Dorsolateral prefrontal cortex (tissue), 120 donors: ENCODE measurements at regions of chr7 and their contacts with region 1.

Region 1: DNA sequence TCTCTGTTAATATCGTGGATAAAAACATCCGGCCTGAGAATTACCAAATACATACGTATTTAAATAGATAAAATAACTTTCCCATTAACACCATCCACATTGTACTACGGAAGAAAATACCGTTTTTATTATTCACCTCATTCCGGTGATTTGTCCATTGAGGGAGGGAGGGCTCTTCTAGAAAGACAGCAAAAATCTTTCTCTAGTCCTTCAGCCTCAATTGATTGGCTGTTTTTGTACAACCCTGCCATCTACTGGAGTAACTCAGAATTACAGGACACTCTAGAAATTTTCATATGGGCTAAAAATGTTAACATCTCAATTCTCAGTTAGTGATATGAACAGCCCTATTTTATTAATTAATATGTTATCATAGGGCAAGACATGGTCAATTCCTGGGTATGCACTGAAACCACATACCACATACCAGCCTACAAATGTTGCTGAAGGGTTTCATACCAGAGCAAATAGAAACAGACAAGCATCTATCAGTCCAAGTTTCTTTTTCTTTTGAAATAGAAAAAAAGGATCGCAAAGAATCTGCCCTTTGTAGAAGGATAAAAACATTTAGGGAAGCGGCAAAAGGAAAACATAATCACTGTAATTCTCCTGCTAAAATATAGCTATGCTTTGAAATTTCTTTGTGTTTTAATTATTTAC is 55.8 kb upstream of the CDCA7L start:
- DNase-seq: no peak
- H3K4me3 ChIP-seq: peak overlapping the region in 29 of 59 donors; percentile 2 to 51 (median 28)
- H3K27ac ChIP-seq: no peak overlapping the region
- H3K27me3 ChIP-seq: peaks cover 0 to 6% (median 0%) of the 10 kb centered on the region in 45 donors
- CTCF ChIP-seq: peak; percentile 72 to 98 (median 88)

Region 2: DNA sequence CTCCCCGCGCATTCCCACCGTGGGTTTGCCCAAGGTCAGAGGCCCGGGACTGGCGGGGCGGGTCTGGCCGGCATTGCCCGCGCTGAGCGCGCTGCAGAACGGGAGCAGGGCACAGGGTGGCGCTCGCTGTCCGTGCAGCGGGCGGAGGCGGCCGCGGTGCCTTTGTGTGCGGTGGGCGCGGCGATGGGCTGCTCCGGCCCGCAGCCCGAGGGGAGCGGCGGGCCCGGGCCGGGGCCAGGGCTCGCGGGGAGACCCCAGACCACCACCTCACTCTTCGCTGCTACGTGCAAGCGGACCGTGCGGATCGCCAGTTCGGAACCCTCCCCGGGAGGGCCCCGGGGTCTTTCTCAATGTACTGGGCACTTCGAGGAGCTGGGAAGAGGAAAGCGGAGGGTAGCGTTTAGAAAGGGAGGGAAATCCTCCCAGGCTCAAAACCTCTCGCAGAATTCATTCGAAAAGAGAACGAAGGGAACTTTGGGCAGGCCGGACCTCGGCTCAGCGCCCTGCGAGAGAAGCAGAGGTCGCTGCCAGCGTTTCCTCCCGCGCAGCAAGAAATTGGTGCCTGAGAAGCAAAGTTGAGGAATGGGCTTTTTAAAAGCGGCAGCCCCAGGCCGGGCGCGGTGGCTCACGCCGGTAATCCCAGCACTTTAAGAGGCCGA is 1223.3 kb before region 1 on chr7:
- intact Hi-C with region 1: loop called in 1 of 2 experiments (anchors 10 kb)
- DNase-seq: peak in 1 of 10 donors; percentile 66
- H3K4me3 ChIP-seq: peak overlapping the region in 54 of 59 donors; percentile 4 to 64 (median 44)
- H3K27ac ChIP-seq: no peak overlapping the region
- H3K27me3 ChIP-seq: peaks cover 6 to 100% (median 96%) of the 10 kb centered on the region in 45 donors
- CTCF ChIP-seq: peak in 53 of 56 donors; percentile 18 to 76 (median 56)

Region 3: DNA sequence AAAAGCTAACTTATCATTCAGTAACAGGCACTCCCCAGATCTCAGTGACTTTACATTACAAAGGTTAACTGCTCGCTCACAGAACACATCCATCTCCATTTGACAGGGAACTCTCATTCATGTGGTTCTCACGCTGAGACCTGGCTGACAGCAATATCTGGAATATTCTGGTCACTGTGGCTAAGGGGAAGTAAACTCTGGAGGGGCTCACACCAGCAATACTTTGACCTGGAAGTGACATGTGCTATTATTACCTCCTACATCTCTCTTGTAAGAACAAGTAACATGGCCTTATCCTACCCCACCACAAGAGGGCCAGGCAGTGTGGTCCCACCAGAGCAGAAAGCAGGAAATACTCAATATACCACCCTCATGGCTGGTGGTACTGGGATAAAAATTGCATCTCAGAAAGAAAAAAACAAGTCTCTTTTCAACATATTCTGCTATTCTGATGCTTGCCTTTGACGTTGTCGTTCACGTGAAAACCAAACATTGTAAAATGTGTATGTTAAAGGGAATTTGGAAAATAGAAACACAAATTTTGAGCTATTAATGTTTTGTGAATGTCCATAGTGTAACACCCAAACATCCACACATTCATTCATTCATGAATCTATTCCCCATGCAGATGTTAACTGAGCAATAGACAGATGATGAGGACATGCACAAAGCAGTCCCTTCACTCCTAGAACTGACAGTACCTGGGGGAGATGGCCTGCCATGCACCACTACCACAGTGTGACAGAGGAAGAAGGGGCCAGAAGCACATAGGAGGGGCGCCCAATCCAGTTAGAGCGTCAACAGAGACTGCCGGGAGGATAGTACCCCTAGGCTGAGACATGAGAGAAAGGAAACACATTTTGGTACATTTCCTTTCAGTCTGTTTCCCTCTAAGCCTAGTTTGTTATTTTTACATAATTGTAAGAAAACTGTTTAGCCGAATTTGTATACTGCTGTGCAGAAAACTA is 739.6 kb before region 1 on chr7:
- intact Hi-C with region 1: loop called (anchors 2 to 10 kb)
- DNase-seq: peak in 3 of 10 donors; percentile 26 to 44 (median 42)
- H3K4me3 ChIP-seq: no peak overlapping the region
- H3K27ac ChIP-seq: no peak overlapping the region
- H3K27me3 ChIP-seq: peaks cover 0 to 33% (median 5%) of the 10 kb centered on the region in 45 donors
- CTCF ChIP-seq: peak in 51 of 56 donors; percentile 14 to 63 (median 47)

Region 4: DNA sequence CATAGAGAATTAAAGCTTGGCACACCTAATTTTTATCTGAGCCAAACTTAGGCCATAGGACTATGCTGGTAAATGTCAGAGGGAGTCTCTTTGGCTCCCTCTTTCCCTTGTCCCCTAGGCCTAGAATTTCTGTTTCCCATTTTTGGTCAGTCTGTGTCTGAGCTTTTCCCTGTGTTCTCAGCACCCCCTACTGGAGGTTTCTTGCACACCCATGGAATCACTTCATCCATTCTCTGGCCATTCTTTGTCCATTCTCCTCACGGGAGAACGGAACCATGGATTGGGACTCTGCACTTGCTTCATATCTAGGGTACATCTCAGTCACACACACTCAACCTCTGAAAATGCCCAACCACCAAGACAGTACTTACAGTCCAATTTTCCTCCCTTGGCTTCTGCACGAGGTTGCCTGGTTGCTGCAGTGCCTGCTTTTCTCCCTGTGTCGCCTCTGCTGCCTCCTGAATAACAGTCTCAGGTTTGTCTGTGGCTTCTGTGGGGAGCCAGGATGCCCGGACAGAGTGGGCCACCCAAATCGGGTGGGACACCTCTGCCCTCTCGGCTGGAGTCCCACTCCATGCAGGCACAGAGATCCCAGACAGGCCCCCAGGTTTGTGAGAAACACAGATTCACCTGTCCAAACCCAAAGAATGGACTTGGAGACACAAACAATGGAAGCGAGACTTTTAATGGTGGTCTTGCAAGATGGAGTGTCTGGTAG is 493.7 kb before region 1 on chr7:
- intact Hi-C with region 1: loop called in 1 of 2 experiments (anchors 10 kb)
- DNase-seq: peak in 3 of 10 donors; percentile 11 to 53 (median 51)
- H3K4me3 ChIP-seq: no peak overlapping the region
- H3K27ac ChIP-seq: no peak overlapping the region
- H3K27me3 ChIP-seq: no peaks in the 10 kb centered on the region
- CTCF ChIP-seq: peak; percentile 49 to 83 (median 70)